ENCODE measurements at regions of chrX and their contacts with region 1.

Region 1: GRCh38 chrX:68822641-68823410 is 6.0 kb upstream of the EFNB1 start:
- DNase-seq: no peak
- ATAC-seq: peak; percentile 49 to 76
- H3K4me3 ChIP-seq: no peak overlapping the region
- H3K27ac ChIP-seq: no peak overlapping the region
- H3K4me1 ChIP-seq: no peaks in the 10 kb centered on the region
- H3K27me3 ChIP-seq: no peaks in the 10 kb centered on the region
- CTCF ChIP-seq: peak in 4 of 5 experiments; percentile 17 to 58 (median 46)
- POLR2A ChIP-seq: no peak

Region 2: GRCh38 chrX:68511255-68511654 is 311.6 kb before region 1 on chrX:
- in situ Hi-C with region 1: loop called in 2 of 4 experiments (anchors 25 kb)
- intact Hi-C with region 1: no loop called
- DNase-seq: no peak
- ATAC-seq: no peak
- H3K4me3 ChIP-seq: no peak overlapping the region
- H3K27ac ChIP-seq: no peak overlapping the region
- H3K4me1 ChIP-seq: peaks cover 7% of the 10 kb centered on the region in 2 donors
- H3K27me3 ChIP-seq: no peaks in the 10 kb centered on the region
- CTCF ChIP-seq: peak; percentile 45 to 85 (median 64)
- POLR2A ChIP-seq: no peak

Region 3: GRCh38 chrX:68807818-68808217 is 15.0 kb before region 1 on chrX:
- in situ Hi-C with region 1: no loop called
- intact Hi-C with region 1: loop called (anchors 1 kb)
- DNase-seq: no peak
- ATAC-seq: no peak
- H3K4me3 ChIP-seq: no peak overlapping the region
- H3K27ac ChIP-seq: no peak overlapping the region
- H3K4me1 ChIP-seq: no peaks in the 10 kb centered on the region
- H3K27me3 ChIP-seq: no peaks in the 10 kb centered on the region
- CTCF ChIP-seq: peak in 4 of 5 experiments; percentile 13 to 43 (median 25)
- POLR2A ChIP-seq: no peak

Region 4: DNA sequence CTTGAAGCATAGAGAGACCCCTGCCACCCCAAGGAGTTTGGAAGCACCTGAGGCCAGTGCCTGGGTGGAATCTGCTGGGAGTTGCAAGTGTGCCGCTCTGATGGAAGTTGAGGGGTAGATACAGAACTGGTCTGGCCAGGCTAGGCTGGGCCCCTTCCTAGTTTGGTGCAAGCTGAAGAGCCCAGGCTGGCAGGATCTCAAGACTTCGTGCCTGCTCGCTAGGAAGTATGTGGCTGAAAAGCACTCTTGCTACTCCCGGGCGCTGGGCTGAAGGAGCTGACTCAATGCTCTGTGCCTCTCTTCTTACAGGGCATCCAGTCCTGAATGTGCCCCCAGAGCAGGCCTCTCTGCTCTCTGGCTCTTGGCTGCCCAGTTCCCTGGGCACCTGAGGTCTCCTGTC is 394.1 kb after region 1 on chrX:
- in situ Hi-C with region 1: loop called in 2 of 4 experiments (anchors 5 to 10 kb)
- intact Hi-C with region 1: no loop called
- DNase-seq: no peak
- ATAC-seq: no peak
- H3K4me3 ChIP-seq: no peak overlapping the region
- H3K27ac ChIP-seq: no peak overlapping the region
- H3K4me1 ChIP-seq: no peaks in the 10 kb centered on the region
- H3K27me3 ChIP-seq: peaks cover 0 to under 1% (median 0%) of the 10 kb centered on the region in 3 donors
- CTCF ChIP-seq: no peak
- POLR2A ChIP-seq: no peak

Region 5: GRCh38 chrX:69229436-69229835 is 406.6 kb after region 1 on chrX:
- in situ Hi-C with region 1: loop called in 1 of 4 experiments (anchors 5 kb)
- intact Hi-C with region 1: no loop called
- DNase-seq: no peak
- ATAC-seq: no peak
- H3K4me3 ChIP-seq: no peak overlapping the region
- H3K27ac ChIP-seq: no peak overlapping the region
- H3K4me1 ChIP-seq: no peaks in the 10 kb centered on the region
- H3K27me3 ChIP-seq: no peaks in the 10 kb centered on the region
- CTCF ChIP-seq: no peak
- POLR2A ChIP-seq: no peak

Region 6: GRCh38 chrX:69285881-69286564 is 463.2 kb after region 1 on chrX:
- in situ Hi-C with region 1: loop called in 3 of 4 experiments (anchors 5 to 10 kb)
- intact Hi-C with region 1: loop called (anchors 1 kb)
- DNase-seq: peak in 1 of 2 donors; percentile 15
- ATAC-seq: peak; percentile 58 to 62
- H3K4me3 ChIP-seq: peak overlapping the region; percentile 42 to 50 (median 47)
- H3K27ac ChIP-seq: no peak overlapping the region
- H3K4me1 ChIP-seq: peaks cover 0 to 4% of the 10 kb centered on the region in 2 donors
- H3K27me3 ChIP-seq: no peaks in the 10 kb centered on the region
- CTCF ChIP-seq: peak; percentile 54 to 90 (median 80)
- POLR2A ChIP-seq: no peak